Activated CD4-positive, alpha-beta T cell treated with anti-CD3 and anti-CD28 coated beads for 36 hours (primary cell): ENCODE measurements at regions of chr13 and their contacts with region 1.

Region 1: DNA sequence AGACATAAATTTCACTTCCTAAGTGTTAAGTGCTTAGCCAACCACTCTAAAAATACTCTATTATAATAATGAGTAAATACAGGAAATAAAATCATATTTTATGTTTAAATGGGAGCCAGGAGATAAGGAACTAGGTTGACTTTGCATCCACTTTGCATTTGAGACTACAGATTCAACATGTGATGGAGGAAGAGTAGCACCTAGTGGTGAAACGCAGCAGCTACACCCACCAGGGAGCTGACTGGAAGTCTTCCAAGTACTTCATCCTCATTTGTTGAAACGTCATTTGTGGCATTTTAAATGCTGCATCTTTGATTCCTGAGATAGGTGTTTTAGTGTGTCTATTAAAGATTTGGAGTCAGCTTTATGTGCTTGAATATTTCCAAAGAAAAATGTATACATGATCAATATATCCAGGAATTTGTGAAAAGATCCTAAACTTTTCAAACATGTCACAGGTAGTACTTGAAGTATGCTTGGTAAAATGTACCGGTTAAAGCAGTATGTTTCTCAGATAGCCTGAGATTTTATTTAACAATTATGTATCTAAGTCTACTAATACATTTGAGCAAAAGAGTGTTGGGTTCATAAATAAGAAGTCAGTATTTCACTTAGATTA is 17.4 kb upstream of the KCTD12 start:
- DNase-seq: peak; percentile 79
- ATAC-seq: peak; percentile 80
- H3K4me3 Mint-ChIP-seq: no peak overlapping the region
- H3K27ac Mint-ChIP-seq: no peak overlapping the region
- H3K4me1 Mint-ChIP-seq: no peaks in the 10 kb centered on the region
- H3K27me3 Mint-ChIP-seq: peaks cover 10% of the 10 kb centered on the region

Region 2: DNA sequence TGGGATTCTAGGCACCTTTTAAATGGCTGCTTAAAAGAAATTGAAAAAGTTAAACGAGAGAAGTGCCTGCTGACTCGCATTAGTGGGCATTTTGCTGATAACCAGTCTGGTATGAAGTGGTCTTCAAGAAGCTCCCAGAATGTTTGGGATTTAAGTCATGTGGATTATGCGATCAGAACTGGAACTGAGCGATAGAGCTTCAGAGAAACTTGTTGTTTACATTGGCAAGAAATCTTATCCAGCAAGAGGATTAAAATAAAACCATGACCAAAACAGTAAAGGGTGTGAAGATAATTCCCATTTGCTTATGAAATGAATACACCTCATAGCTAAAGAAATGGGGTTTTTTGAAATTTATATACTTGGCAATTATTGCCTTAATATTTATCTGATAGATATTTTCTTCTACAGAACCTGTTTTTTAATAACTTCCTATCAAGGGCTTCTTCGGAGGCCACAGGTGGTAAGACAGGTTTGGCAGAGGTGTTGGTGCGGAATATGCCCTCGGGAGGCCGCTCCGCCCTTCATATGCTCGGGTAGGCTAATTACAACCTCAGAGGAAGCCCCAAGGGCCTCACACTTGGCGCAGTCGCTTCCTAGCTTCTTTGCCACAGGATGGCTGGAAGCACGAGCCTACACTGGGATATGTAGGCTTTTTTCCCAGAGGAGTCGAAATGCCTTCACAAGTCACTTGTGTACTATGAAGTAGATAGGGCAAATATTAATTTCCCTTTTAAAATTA is 1198.9 kb before region 1 on chr13:
- CTCF ChIA-PET with region 1: no interaction called
- POLR2A ChIA-PET with region 1: no interaction called
- intact Hi-C with region 1: loop called (anchors 5 to 10 kb)
- DNase-seq: no peak
- ATAC-seq: no peak
- H3K4me3 Mint-ChIP-seq: no peak overlapping the region
- H3K27ac Mint-ChIP-seq: no peak overlapping the region
- H3K4me1 Mint-ChIP-seq: peaks cover 16% of the 10 kb centered on the region
- H3K27me3 Mint-ChIP-seq: no peaks in the 10 kb centered on the region

Region 3: GRCh38 chr13:75876360-75877050 is 1027.1 kb before region 1 on chr13:
- CTCF ChIA-PET with region 1: interaction called, 23 read pairs
- POLR2A ChIA-PET with region 1: no interaction called
- intact Hi-C with region 1: loop called (anchors 1 to 2 kb)
- DNase-seq: peak; percentile 71
- ATAC-seq: peak; percentile 90
- H3K4me3 Mint-ChIP-seq: no peak overlapping the region
- H3K27ac Mint-ChIP-seq: no peak overlapping the region
- H3K4me1 Mint-ChIP-seq: peaks cover 13% of the 10 kb centered on the region
- H3K27me3 Mint-ChIP-seq: peaks cover 3% of the 10 kb centered on the region

Region 4: GRCh38 chr13:76667551-76667950 is 236.1 kb before region 1 on chr13:
- CTCF ChIA-PET with region 1: interaction called, 17 read pairs
- POLR2A ChIA-PET with region 1: no interaction called
- intact Hi-C with region 1: loop called (anchors 1 kb)
- DNase-seq: peak; percentile 9
- ATAC-seq: peak; percentile 88
- H3K4me3 Mint-ChIP-seq: no peak overlapping the region
- H3K27ac Mint-ChIP-seq: no peak overlapping the region
- H3K4me1 Mint-ChIP-seq: no peaks in the 10 kb centered on the region
- H3K27me3 Mint-ChIP-seq: peaks cover under 1% of the 10 kb centered on the region

Region 5: GRCh38 chr13:76861859-76862258 is 41.8 kb before region 1 on chr13:
- CTCF ChIA-PET with region 1: no interaction called
- POLR2A ChIA-PET with region 1: no interaction called
- intact Hi-C with region 1: no loop called
- DNase-seq: no peak
- ATAC-seq: no peak
- H3K4me3 Mint-ChIP-seq: no peak overlapping the region
- H3K27ac Mint-ChIP-seq: no peak overlapping the region
- H3K4me1 Mint-ChIP-seq: no peaks in the 10 kb centered on the region
- H3K27me3 Mint-ChIP-seq: peaks cover 4% of the 10 kb centered on the region

Region 6: DNA sequence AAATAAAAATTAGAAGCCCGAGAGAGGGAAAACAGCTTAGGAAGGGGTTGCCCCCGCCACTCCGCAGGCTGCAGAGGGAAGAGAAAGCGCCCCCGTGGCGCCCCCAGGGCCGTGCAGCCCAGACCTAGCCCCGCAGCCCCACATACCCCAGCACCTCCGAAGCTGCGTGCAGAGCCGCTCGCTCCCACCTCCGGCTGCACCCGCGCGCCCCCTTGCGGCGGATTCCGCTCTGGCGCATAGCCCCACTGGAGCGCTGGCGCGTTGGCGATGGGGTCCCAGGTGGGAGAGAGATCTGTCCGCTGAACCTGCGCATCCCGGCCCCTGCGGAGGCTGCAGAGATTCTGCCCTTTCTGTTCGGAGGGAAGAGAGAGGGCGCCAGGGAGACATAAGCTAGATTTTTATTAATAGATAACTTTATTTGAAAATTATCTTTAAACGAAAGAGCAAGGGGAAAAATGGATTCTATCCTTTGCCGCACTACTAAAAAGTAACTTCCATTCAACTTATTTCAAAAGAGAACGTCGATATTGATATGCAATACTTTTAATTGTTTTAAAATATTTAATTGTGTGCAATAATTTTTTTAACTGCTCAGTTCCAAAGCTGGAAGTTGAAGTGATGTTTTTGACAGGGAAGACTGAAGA is 76.5 kb after region 1 on chr13:
- CTCF ChIA-PET with region 1: interaction called, 10 read pairs
- POLR2A ChIA-PET with region 1: no interaction called
- intact Hi-C with region 1: no loop called
- DNase-seq: peak; percentile 93
- ATAC-seq: peak; percentile 100
- H3K4me3 Mint-ChIP-seq: peak overlapping the region; percentile 51
- H3K27ac Mint-ChIP-seq: no peak overlapping the region
- H3K4me1 Mint-ChIP-seq: peaks cover 7% of the 10 kb centered on the region
- H3K27me3 Mint-ChIP-seq: peaks cover 20% of the 10 kb centered on the region

Region 7: DNA sequence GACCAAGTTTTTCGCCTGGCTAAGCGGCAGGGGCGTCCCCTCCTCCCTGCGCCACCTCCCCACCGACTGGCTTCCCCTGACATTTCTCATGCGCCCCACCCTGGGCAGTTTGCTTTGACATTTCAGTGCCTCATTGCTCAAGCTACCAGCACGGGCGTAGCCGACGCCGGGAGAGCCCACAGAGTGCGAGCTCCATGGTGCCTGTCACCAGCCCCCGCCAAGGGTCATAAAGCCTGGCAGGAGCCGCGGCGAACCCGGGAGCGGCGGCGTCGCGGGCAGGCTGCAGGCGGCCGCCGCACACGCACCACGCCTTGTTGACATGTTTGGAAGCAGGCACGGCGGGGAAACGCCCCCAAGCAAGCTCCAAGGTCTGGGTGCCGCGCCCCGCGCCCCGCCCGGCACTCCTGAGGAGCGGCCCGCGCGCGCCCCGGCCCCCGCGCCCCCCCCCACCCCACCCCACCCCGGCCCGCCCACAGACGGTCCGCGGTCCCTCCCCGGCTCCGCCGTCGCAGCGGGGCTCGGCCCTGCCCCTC is 122.7 kb after region 1 on chr13:
- CTCF ChIA-PET with region 1: no interaction called
- POLR2A ChIA-PET with region 1: no interaction called
- intact Hi-C with region 1: no loop called
- DNase-seq: peak; percentile 86
- ATAC-seq: peak; percentile 63
- H3K4me3 Mint-ChIP-seq: peak overlapping the region; percentile 92
- H3K27ac Mint-ChIP-seq: peak overlapping the region; percentile 96
- H3K4me1 Mint-ChIP-seq: peaks cover 51% of the 10 kb centered on the region
- H3K27me3 Mint-ChIP-seq: peaks cover 2% of the 10 kb centered on the region

Region 8: GRCh38 chr13:77124423-77124822 is 220.8 kb after region 1 on chr13:
- CTCF ChIA-PET with region 1: no interaction called
- POLR2A ChIA-PET with region 1: no interaction called
- intact Hi-C with region 1: no loop called
- DNase-seq: no peak
- ATAC-seq: no peak
- H3K4me3 Mint-ChIP-seq: no peak overlapping the region
- H3K27ac Mint-ChIP-seq: no peak overlapping the region
- H3K4me1 Mint-ChIP-seq: no peaks in the 10 kb centered on the region
- H3K27me3 Mint-ChIP-seq: no peaks in the 10 kb centered on the region